T-cell (primary cell): ENCODE measurements at regions of chr6 and their contacts with region 1.

Region 1: DNA sequence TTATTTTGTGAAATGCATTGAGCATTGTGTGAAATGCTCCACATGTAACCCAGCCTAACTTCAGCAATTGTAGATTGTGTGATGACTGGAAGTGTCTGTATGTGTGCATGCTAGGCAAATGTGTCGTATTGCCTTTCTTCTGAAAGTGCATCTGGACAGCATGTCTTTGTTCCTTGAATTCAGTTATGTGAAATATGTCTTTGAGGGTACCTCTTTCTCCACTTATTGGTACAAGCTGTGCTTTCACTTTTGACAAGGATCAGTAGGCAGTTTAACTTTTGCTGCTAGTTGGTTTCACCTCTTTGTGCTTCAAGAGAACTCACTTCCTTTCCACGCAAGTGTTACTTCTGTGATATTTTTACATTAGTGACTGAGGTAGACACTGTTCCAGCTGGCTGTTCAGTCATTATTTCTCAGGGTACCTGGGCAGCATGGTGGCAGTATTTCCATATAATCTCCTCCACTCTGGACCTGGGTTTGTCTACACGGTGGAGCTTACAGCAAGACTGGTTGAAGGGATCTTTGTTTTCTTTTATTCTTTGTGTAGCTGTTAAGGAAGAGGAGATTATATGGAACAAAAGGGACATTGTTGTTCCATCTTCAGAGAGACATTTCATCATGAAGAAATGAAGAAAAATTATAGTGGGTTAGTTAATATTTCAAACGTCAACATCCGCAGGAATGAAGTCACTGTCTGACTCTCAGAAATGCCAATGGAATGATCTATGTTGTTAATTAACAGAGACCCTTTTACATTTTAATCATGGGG is 175.4 kb downstream of the UTRN start:
- DNase-seq: peak in 1 of 35 experiments; percentile 39
- ATAC-seq: peak; percentile 54 to 83 (median 70)
- H3K4me3 ChIP-seq: no peak overlapping the region
- H3K4me3 Mint-ChIP-seq: peak overlapping the region in 2 of 3 donors; percentile 13 to 66
- H3K27ac ChIP-seq: peak overlapping the region; percentile 19
- H3K27ac Mint-ChIP-seq: peak overlapping the region; percentile 85 to 95
- H3K4me1 ChIP-seq: peaks cover 8 to 9% of the 10 kb centered on the region in 2 experiments
- H3K4me1 Mint-ChIP-seq: peaks cover 28 to 35% (median 30%) of the 10 kb centered on the region in 3 donors
- H3K27me3 ChIP-seq: no peaks in the 10 kb centered on the region
- H3K27me3 Mint-ChIP-seq: no peaks in the 10 kb centered on the region

Region 2: GRCh38 chr6:144482142-144482541 is 21.6 kb after region 1 on chr6:
- CTCF ChIA-PET with region 1: interaction called in 1 of 2 experiments, 3 read pairs
- POLR2A ChIA-PET with region 1: interaction called in 1 of 2 experiments, 12 read pairs
- DNase-seq: peak; percentile 37 to 80 (median 67)
- ATAC-seq: peak; percentile 66 to 77 (median 74)
- H3K4me3 ChIP-seq: no peak overlapping the region
- H3K4me3 Mint-ChIP-seq: no peak overlapping the region
- H3K27ac ChIP-seq: no peak overlapping the region
- H3K27ac Mint-ChIP-seq: peak overlapping the region; percentile 32 to 52
- H3K4me1 ChIP-seq: no peaks in the 10 kb centered on the region
- H3K4me1 Mint-ChIP-seq: peaks cover 0 to 11% (median 9%) of the 10 kb centered on the region in 3 donors
- H3K27me3 ChIP-seq: no peaks in the 10 kb centered on the region
- H3K27me3 Mint-ChIP-seq: no peaks in the 10 kb centered on the region

Region 3: GRCh38 chr6:144510859-144511258 is 50.3 kb after region 1 on chr6:
- CTCF ChIA-PET with region 1: no interaction called
- POLR2A ChIA-PET with region 1: interaction called in 1 of 2 experiments, 11 read pairs
- DNase-seq: no peak
- ATAC-seq: no peak
- H3K4me3 ChIP-seq: no peak overlapping the region
- H3K4me3 Mint-ChIP-seq: no peak overlapping the region
- H3K27ac ChIP-seq: no peak overlapping the region
- H3K27ac Mint-ChIP-seq: no peak overlapping the region
- H3K4me1 ChIP-seq: peaks cover 0 to 2% of the 10 kb centered on the region in 2 experiments
- H3K4me1 Mint-ChIP-seq: peaks cover 5 to 20% (median 14%) of the 10 kb centered on the region in 3 donors
- H3K27me3 ChIP-seq: no peaks in the 10 kb centered on the region
- H3K27me3 Mint-ChIP-seq: no peaks in the 10 kb centered on the region